WTC11 (cell line): ENCODE measurements at regions of chr2 and their contacts with region 1.

Region 1: GRCh38 chr2:102005989-102006885 is 14.5 kb downstream of the IL1R2 start:
- DNase-seq: peak; percentile 50
- ATAC-seq: peak; percentile 95
- H3K4me3 Mint-ChIP-seq: no peak overlapping the region
- H3K27ac Mint-ChIP-seq: no peak overlapping the region
- H3K4me1 Mint-ChIP-seq: peaks cover 4% of the 10 kb centered on the region
- H3K27me3 Mint-ChIP-seq: no peaks in the 10 kb centered on the region
- CTCF ChIP-seq: peak; percentile 48; the same call in 1 of the 2 replicates

Region 2: DNA sequence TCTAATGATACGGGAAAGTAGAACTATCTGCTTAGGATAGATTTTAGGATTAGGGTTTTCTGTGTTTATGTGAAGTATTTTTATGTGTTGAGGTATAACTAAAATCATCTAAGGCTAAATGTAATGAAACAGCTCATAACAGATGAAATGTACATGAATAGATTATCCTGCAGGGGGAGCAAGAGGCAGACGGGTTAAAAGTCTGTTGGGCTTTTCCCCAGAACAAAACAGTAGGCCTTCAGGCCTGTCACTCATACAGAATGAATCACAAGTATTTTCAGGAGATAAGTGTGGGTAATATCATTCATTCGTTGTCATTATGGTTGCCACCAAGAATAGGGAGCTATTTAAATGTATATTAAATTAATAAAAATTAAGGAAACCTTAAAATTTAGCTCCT is 122.4 kb before region 1 on chr2:
- CTCF ChIA-PET with region 1: interaction called, 23 read pairs
- POLR2A ChIA-PET with region 1: no interaction called
- DNase-seq: no peak
- ATAC-seq: peak; percentile 44; the same call in 1 of the 2 replicates
- H3K4me3 Mint-ChIP-seq: no peak overlapping the region
- H3K27ac Mint-ChIP-seq: no peak overlapping the region
- H3K4me1 Mint-ChIP-seq: no peaks in the 10 kb centered on the region
- H3K27me3 Mint-ChIP-seq: no peaks in the 10 kb centered on the region
- CTCF ChIP-seq: peak; percentile 40; the same call in 1 of the 2 replicates

Region 3: GRCh38 chr2:101983928-101984327 is 22.3 kb before region 1 on chr2:
- CTCF ChIA-PET with region 1: interaction called, 13 read pairs
- POLR2A ChIA-PET with region 1: no interaction called
- DNase-seq: no peak
- ATAC-seq: no peak; the same call in 1 of the 2 replicates
- H3K4me3 Mint-ChIP-seq: no peak overlapping the region
- H3K27ac Mint-ChIP-seq: no peak overlapping the region
- H3K4me1 Mint-ChIP-seq: peaks cover 22% of the 10 kb centered on the region
- H3K27me3 Mint-ChIP-seq: no peaks in the 10 kb centered on the region
- CTCF ChIP-seq: no peak

Region 4: DNA sequence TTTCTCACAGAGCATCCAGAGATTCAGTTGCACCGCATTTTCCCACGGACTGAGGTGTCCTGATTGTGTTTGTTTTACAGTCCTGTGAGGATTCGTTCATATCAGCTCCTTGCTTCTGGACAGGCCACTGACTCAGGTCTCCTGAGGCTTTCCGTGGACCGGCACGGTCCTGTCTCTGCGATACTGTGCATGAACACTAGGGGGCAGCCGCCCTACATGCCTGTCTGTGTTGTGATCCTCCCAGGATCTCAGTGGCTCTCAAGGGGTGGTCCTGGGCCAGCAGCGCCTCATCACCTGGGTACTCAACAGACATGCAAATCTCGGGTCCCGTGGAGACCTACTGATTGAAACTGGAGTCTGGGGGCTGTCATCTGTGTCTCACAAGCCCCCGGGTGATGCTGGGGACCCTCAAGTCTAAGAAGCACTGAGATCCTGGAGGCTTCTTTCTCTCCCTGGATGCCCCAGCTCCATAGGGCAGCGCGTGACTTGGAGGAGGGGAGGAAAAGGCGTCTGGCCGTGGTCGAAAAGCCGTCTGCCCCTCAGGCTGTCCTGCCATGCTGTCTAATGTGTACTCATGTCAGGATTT is 14.5 kb after region 1 on chr2:
- CTCF ChIA-PET with region 1: interaction called, 28 read pairs
- POLR2A ChIA-PET with region 1: no interaction called
- DNase-seq: peak; percentile 93
- ATAC-seq: peak; percentile 98
- H3K4me3 Mint-ChIP-seq: no peak overlapping the region
- H3K27ac Mint-ChIP-seq: no peak overlapping the region
- H3K4me1 Mint-ChIP-seq: 0 out of 2 replicates have a peak, but pooled peaks cover 7% of the 10 kb centered on the region
- H3K27me3 Mint-ChIP-seq: no peaks in the 10 kb centered on the region
- CTCF ChIP-seq: peak; percentile 98

Region 5: DNA sequence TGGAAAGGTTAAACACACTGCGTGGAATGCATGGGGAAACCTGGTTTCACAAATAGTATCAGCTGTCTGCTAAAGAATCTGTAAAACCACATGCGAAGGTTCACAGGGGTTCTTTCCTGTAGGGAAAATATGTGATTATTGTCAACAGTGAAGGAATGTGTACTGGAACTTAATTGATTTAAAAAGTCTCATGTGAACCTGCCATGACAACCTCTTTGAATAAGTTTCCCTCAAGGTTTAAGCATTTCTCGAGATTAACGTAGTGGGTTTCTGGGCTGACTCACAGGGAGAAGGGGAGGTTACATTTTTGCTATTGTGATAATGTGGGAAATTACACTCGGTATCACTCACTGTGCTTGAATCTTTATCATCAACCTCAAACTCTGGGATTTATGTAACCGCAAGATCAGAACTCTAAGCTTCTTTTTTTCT is 108.1 kb after region 1 on chr2:
- CTCF ChIA-PET with region 1: no interaction called
- POLR2A ChIA-PET with region 1: no interaction called
- DNase-seq: no peak
- ATAC-seq: no peak
- H3K4me3 Mint-ChIP-seq: no peak overlapping the region
- H3K27ac Mint-ChIP-seq: no peak overlapping the region; the same call in 1 of the 2 replicates
- H3K4me1 Mint-ChIP-seq: peaks cover 16% of the 10 kb centered on the region
- H3K27me3 Mint-ChIP-seq: no peaks in the 10 kb centered on the region; the same call in 1 of the 2 replicates
- CTCF ChIP-seq: no peak

Region 6: DNA sequence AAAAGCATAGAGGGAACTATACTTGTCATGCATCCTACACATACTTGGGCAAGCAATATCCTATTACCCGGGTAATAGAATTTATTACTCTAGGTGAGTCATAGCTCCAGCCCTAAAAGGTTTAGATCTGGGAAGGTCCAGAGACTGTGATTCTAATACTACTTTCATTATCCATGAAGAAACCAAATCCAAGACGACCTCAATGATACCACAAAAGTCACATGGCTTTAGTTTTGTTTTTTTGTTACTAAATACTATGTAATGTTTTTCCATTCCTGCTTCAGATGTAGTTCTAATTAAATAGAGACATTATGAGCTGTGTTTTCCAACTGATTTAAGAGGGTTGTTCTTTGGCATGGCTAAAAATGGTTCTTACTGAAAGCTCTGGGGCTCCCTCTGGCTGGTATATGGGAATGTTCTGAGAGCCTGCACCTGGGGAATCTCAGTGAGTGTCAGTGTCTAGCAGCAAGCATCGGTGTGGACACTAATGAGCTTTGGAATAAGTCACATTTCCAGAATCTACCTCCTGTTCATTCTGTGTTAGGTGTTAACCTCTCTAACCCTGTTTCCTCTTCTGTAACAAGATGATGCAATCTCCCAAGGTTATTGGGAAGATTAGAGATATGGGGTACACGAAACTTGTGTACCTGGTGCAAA is 160.1 kb after region 1 on chr2:
- CTCF ChIA-PET with region 1: interaction called, 22 read pairs
- POLR2A ChIA-PET with region 1: no interaction called
- DNase-seq: no peak
- ATAC-seq: peak; percentile 85
- H3K4me3 Mint-ChIP-seq: no peak overlapping the region
- H3K27ac Mint-ChIP-seq: no peak overlapping the region
- H3K4me1 Mint-ChIP-seq: peaks cover 1% of the 10 kb centered on the region
- H3K27me3 Mint-ChIP-seq: no peaks in the 10 kb centered on the region
- CTCF ChIP-seq: no peak

Region 7: DNA sequence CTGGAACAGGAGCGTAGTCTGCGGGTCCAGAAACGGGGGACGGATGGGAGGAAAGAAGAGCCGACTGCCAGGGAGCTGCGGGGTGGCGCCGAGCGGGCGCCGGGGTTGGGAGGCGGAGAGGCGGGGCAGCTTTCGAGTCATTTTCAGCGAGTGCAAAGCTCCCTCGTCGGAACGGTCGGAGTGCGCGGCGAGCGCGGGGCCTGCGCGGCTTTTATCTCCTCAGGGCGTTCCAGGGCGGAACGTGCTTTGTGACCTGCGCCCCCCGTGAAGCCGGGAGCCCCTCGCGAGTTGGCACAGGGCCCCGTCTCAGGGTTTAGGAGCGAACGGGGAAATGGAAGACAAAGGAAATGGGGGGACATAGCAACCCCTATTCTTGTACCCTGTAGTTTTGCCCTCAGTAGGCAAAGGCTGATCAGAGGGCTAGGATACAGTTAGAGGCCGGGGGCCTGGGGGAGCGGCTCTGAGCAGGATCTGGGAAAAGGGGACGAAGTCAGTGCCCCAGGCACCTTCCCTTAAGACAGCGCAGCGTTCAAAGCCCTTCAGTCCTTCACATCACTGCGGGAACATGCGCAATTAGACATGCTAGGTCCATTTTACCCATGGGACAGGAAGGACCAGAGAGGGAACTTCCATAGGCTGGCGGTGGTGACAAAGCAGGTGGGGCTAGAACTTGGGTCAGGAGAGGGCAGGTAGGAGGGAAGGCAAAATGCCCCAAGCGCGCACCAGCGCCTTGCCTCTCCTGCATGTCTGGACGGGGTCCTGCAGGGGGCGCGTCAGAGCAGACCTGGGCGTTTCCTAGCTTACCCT is 245.0 kb after region 1 on chr2:
- CTCF ChIA-PET with region 1: interaction called, 12 read pairs
- POLR2A ChIA-PET with region 1: no interaction called
- DNase-seq: peak; percentile 80
- ATAC-seq: peak; percentile 93
- H3K4me3 Mint-ChIP-seq: peak overlapping the region; percentile 82
- H3K27ac Mint-ChIP-seq: no peak overlapping the region
- H3K4me1 Mint-ChIP-seq: peaks cover 3% of the 10 kb centered on the region; the same call in 1 of the 2 replicates
- H3K27me3 Mint-ChIP-seq: peaks cover 34% of the 10 kb centered on the region
- CTCF ChIP-seq: peak; percentile 77